Naive thymus-derived CD8-positive, alpha-beta T cell (primary cell): ENCODE measurements at regions of chr19 and their contacts with region 1.

Region 1: DNA sequence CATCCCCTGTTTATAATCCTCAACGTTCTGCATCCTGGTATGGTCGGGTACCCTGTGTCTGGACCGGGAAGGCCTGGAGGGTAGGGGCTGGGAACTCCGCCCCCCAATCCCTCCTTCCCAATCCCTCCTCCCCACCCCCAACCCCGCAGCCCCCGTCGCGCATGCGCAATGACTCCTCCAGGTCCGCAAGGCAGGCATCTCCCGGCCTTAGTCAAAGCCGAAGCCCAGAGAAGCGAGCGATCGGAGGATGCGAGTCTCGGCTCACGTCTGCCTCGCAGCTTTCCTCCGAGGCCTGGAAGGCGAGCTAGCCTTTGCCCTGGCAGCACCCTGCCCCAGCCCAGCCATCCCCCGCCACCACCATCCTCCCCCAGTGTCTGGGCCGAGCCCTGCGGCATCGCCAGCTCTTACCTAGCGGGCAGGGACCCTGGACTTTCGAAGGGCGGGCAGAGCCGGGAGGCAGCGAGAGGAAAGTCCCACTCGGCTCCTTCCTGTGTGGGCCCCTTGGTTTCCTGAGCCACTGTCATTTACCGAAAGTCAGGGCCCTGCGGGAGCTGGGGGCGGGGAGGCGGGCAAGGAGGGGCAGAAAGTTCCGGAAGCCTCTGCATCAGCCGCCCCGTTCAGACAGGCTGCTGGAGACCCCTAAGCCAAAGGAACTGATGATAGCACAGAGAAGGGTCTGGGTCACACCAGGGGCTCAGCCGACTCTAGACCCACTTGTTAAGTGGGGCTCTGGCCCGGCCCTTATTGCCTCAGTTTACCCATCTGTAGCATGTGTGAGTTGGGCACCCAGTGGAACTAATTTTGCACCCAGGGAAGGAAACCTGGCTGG is at the start of gene JAK3:
- DNase-seq: peak; percentile 70 to 90 (median 84)
- ATAC-seq: peak; percentile 81 to 88
- H3K4me3 Mint-ChIP-seq: peak within 1 kb of the TSS; percentile 78 to 98 (median 94)
- H3K27ac Mint-ChIP-seq: peak within 1 kb of the TSS; percentile 92 to 99 (median 97)
- H3K4me1 Mint-ChIP-seq: peaks cover 26 to 77% (median 75%) of the 10 kb centered on the region in 4 donors
- H3K27me3 Mint-ChIP-seq: no peaks in the 10 kb centered on the region
- polyA plus RNA-seq, gene JAK3: 78.7 to 122 (median 109) TPM

Region 2: DNA sequence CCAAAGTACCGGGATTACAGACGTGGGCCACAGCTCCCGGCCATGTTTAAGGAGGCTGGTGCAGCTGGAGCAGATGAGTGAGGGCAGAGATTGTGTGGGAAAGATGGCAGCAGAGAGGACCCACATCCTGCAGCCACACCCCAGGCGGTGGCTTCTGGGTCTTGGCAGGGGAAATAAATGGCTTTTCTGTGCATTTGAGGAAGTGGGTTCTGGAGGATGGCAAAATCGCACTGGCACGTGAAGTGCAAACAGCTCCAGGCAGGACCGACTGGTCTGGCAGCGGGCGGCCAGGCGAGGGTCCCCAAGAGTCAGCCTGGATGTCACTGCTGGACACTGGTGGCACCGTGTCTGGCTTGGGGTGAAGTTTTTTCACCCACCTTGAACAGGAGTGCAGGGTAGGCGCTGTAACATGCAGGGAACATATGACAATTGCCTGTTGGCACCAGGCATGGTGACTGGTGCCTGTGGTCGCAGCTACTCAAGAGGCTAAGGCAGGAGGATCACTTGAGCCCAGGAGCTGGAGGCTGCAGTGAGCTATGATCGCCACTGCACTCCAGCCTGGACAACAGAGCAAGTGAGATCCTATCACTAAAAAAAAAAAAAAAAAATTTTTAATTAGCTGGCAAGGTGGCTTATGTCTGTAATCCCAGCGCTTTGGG is 44.4 kb before region 1 on chr19:
- POLR2A ChIA-PET with region 1: interaction called, 13 read pairs
- DNase-seq: peak in 5 of 10 donors; percentile 19 to 64 (median 35)
- ATAC-seq: peak; percentile 70 to 82
- H3K4me3 Mint-ChIP-seq: peak overlapping the region; percentile 74 to 89 (median 78)
- H3K27ac Mint-ChIP-seq: peak overlapping the region; percentile 78 to 95 (median 90)
- H3K4me1 Mint-ChIP-seq: peaks cover 23 to 55% (median 44%) of the 10 kb centered on the region in 4 donors
- H3K27me3 Mint-ChIP-seq: no peaks in the 10 kb centered on the region

Region 3: DNA sequence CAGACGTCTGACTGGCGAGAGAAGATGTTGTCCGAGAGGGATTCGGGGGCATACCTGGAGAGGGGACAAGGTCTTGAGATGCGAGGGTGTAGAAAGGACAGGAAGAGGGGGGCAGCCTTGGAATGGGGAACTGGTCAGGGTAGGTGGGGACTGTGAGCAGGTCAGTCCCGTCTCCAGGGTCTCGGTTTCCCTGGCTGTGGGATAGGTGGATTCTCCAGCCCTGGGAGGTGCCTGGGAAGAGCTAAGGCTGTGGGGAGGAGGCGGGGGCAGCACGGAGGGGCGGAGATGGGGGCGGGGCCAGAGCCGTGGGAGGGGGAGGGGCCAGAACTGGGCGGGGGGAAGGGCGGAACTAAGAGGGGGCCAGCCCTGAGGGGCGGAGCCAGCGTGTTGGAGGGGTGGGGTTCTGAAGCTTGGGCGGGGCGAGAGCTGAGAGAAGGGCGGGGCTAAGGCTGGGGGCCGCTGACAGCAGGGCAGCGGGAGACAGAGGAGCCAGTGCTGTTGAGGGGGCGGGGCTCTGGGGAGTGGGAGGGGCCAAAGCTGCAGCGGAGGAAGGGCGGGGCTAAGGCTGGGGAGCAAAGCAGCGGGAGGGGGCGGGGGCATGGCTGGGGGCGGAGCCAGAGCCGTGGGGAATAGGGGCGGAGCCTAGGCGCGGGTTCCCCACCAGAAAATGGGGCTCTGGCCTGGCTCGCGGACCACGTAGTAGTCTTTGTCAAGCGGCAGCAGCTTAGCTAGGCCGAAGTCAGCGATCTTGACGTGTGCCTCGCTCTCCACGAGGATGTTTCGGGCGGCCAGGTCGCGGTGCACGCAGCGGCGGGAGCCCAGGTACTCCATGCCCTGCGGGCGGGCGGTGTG is 17.0 kb before region 1 on chr19:
- POLR2A ChIA-PET with region 1: interaction called, 10 read pairs
- DNase-seq: peak in 8 of 10 donors; percentile 8 to 55 (median 44)
- ATAC-seq: peak; percentile 58 to 81
- H3K4me3 Mint-ChIP-seq: no peak overlapping the region
- H3K27ac Mint-ChIP-seq: peak overlapping the region in 6 of 10 donors; percentile 51 to 91 (median 70)
- H3K4me1 Mint-ChIP-seq: peaks cover 9 to 18% (median 14%) of the 10 kb centered on the region in 4 donors
- H3K27me3 Mint-ChIP-seq: no peaks in the 10 kb centered on the region

Region 4: DNA sequence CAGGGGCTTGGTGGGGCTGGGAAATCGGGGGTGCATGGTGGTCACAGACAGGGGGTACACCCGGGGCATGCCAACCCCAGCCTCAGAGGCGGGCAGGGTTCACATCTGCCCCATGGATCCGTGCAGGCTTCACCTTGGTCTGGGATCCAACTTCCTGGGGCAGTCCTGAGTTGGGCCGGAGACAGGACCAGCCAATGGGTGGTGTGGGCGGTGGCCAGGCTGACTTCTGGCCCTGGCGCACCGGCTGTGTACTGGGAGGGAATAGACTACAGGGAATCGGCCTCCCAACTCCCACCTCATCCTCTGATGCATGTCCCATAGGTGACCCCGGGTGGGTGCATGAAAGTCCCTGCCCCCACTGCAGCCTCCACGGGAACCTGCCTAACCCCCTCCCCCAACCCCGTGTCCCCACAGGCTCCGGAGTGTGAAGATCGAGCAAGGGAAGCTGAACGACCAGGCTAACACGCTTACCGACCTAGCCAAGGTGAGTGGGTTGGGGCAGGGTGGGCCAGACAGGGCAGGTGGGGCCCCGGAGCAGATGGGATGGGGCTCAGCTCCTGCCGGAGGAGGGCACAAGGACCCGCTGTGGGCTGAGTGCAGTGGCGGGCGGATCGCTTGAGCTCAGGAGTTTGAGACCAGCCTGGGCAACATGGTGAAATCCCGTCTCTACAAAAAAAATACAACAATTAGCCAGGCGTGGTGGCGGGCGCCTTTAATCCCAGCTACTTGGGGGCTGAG is 145.5 kb after region 1 on chr19:
- POLR2A ChIA-PET with region 1: no interaction called
- DNase-seq: no peak
- ATAC-seq: no peak
- H3K4me3 Mint-ChIP-seq: no peak overlapping the region
- H3K27ac Mint-ChIP-seq: no peak overlapping the region
- H3K4me1 Mint-ChIP-seq: peaks cover 2 to 10% (median 5%) of the 10 kb centered on the region in 4 donors
- H3K27me3 Mint-ChIP-seq: no peaks in the 10 kb centered on the region